CD4-positive, alpha-beta memory T cell (primary cell): ENCODE measurements at regions of chr20 and their contacts with region 1.

Region 1: DNA sequence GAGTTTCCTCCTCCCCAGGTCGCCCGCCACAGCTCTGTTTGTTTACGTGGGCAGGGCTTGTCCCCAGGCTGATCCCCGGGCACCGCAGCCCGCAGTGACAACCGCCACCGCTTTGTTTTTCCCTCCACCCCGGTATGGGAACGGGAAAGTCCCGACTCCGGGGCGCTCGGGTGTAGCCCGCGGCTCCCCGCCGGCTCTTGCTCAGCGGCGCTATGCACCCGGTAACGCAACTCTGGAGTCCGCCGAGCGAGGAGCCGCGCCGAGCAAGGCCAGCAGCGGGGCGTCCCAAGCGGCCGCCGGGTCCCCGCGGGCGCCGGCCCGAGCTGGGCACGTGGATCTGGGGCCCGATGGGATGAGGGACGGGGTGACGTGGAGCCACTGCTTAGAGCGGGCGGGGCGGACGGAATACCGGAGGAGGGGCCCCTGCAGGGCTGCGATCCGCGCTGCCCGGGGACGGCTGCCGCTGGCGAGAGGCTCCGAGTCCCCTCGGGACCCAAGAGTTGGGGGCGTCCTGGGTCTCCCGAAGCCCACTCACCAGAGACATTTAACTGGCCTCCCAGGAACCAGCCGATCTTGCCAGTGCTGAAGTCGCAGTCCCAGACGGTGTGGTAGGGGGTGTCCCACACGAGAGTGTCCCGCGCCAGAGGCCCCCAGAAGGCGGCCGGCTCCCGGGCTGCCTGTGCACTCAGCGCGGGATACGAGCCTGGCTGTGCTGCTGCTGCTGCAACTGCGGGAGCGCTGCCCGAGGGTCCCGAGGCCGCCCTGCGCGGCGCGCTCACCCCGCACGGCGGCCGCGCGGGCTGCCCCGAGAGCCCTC is 497 bp downstream of the ACSS1 start:
- DNase-seq: peak; percentile 84 to 93 (median 87)
- H3K4me3 ChIP-seq: peak overlapping the region; percentile 17 to 84
- H3K4me3 Mint-ChIP-seq: peak overlapping the region; percentile 87 to 93 (median 90)
- H3K27ac ChIP-seq: peak overlapping the region; percentile 82
- H3K27ac Mint-ChIP-seq: peak overlapping the region; percentile 88 to 96 (median 94)
- H3K4me1 ChIP-seq: peaks cover 58% of the 10 kb centered on the region
- H3K4me1 Mint-ChIP-seq: peaks cover 35 to 68% (median 47%) of the 10 kb centered on the region in 4 donors
- H3K27me3 ChIP-seq: no peaks in the 10 kb centered on the region
- H3K27me3 Mint-ChIP-seq: peaks cover 0 to under 1% of the 10 kb centered on the region in 2 donors

Region 2: GRCh38 chr20:24948939-24949679 is 108.3 kb before region 1 on chr20 and contains the start of gene CST7:
- CTCF ChIA-PET with region 1: no interaction called
- POLR2A ChIA-PET with region 1: interaction called, 22 read pairs
- intact Hi-C with region 1: loop called (anchors 2 kb)
- DNase-seq: peak; percentile 85 to 94 (median 87)
- H3K4me3 ChIP-seq: peak within 1 kb of the TSS in 1 of 2 donors; percentile 41
- H3K4me3 Mint-ChIP-seq: peak within 1 kb of the TSS; percentile 65 to 91 (median 84)
- H3K27ac ChIP-seq: peak within 1 kb of the TSS; percentile 65
- H3K27ac Mint-ChIP-seq: peak within 1 kb of the TSS; percentile 81 to 99 (median 96)
- H3K4me1 ChIP-seq: peaks cover 36% of the 10 kb centered on the region
- H3K4me1 Mint-ChIP-seq: peaks cover 32 to 80% (median 57%) of the 10 kb centered on the region in 4 donors
- H3K27me3 ChIP-seq: no peaks in the 10 kb centered on the region
- H3K27me3 Mint-ChIP-seq: no peaks in the 10 kb centered on the region
- total RNA-seq, gene CST7: 23.2 to 23.3 TPM

Region 3: GRCh38 chr20:25006431-25007167 is 50.8 kb before region 1 on chr20:
- CTCF ChIA-PET with region 1: no interaction called
- POLR2A ChIA-PET with region 1: no interaction called
- intact Hi-C with region 1: no loop called
- DNase-seq: no peak
- H3K4me3 ChIP-seq: no peak overlapping the region
- H3K4me3 Mint-ChIP-seq: no peak overlapping the region
- H3K27ac ChIP-seq: no peak overlapping the region
- H3K27ac Mint-ChIP-seq: no peak overlapping the region
- H3K4me1 ChIP-seq: no peaks in the 10 kb centered on the region
- H3K4me1 Mint-ChIP-seq: peaks cover 0 to 3% (median 0%) of the 10 kb centered on the region in 4 donors
- H3K27me3 ChIP-seq: no peaks in the 10 kb centered on the region
- H3K27me3 Mint-ChIP-seq: no peaks in the 10 kb centered on the region

Region 4: DNA sequence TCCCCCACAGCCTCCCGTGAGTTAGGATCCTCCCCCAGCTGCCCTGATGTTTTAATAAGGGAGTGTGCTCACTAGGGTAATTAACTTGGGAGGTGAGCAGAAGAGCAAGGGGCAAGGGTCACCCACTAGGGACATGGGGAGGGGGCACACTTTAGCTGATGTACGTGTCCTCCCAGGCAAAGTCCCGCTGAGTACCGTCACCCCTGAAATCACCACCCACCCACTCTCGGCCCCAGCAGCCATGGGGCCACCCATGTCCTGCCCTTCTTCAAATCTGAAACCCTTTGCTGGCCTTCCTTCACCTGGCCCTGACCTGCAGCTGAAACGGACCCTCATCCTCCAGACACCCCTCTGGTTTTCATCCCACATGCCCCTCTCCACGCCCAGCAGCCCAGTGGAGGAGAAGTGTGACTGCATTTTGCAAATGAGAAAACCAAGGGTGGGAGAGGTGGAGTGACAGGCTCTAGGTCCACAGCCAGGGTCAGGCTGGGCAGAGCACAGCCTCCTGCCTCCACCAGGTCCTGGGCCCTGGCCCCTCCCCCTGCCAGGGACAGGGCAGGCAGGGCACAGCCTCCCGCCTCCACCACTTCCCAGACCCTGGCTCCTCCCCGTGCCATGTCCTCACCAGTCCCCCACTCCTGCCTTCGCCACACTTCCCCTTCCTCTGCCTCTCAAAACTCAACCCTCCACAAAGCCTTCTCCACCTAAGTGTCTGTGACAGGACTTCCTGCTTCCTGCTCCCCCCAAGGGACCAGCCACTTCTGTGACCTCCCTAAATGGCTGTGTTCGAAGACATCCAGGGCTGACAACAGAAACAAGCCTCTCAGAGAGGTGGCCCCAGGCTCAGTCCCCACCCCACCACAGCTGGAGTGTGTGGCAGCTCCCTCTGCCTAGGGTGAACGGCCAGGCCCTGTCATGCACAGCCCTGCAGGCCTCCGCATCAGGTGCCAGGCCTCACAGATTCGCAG is 14.6 kb before region 1 on chr20:
- CTCF ChIA-PET with region 1: interaction called, 4 read pairs
- POLR2A ChIA-PET with region 1: interaction called, 17 read pairs
- intact Hi-C with region 1: loop called (anchors 2 kb)
- DNase-seq: peak; percentile 63 to 71 (median 68)
- H3K4me3 ChIP-seq: no peak overlapping the region
- H3K4me3 Mint-ChIP-seq: peak overlapping the region; percentile 11 to 78 (median 58)
- H3K27ac ChIP-seq: peak overlapping the region; percentile 51
- H3K27ac Mint-ChIP-seq: peak overlapping the region; percentile 87 to 97 (median 95)
- H3K4me1 ChIP-seq: peaks cover 48% of the 10 kb centered on the region
- H3K4me1 Mint-ChIP-seq: peaks cover 14 to 62% (median 42%) of the 10 kb centered on the region in 4 donors
- H3K27me3 ChIP-seq: no peaks in the 10 kb centered on the region
- H3K27me3 Mint-ChIP-seq: no peaks in the 10 kb centered on the region

Region 5: GRCh38 chr20:25178563-25179438 is 121.4 kb after region 1 on chr20:
- CTCF ChIA-PET with region 1: interaction called, 12 read pairs
- POLR2A ChIA-PET with region 1: no interaction called
- intact Hi-C with region 1: no loop called
- DNase-seq: peak; percentile 32 to 47 (median 44)
- H3K4me3 ChIP-seq: no peak overlapping the region
- H3K4me3 Mint-ChIP-seq: no peak overlapping the region
- H3K27ac ChIP-seq: no peak overlapping the region
- H3K27ac Mint-ChIP-seq: peak overlapping the region in 2 of 7 donors; percentile 69 to 78
- H3K4me1 ChIP-seq: no peaks in the 10 kb centered on the region
- H3K4me1 Mint-ChIP-seq: peaks cover 0 to 2% (median under 1%) of the 10 kb centered on the region in 4 donors
- H3K27me3 ChIP-seq: no peaks in the 10 kb centered on the region
- H3K27me3 Mint-ChIP-seq: peaks cover 4 to 6% of the 10 kb centered on the region in 2 donors

Region 6: DNA sequence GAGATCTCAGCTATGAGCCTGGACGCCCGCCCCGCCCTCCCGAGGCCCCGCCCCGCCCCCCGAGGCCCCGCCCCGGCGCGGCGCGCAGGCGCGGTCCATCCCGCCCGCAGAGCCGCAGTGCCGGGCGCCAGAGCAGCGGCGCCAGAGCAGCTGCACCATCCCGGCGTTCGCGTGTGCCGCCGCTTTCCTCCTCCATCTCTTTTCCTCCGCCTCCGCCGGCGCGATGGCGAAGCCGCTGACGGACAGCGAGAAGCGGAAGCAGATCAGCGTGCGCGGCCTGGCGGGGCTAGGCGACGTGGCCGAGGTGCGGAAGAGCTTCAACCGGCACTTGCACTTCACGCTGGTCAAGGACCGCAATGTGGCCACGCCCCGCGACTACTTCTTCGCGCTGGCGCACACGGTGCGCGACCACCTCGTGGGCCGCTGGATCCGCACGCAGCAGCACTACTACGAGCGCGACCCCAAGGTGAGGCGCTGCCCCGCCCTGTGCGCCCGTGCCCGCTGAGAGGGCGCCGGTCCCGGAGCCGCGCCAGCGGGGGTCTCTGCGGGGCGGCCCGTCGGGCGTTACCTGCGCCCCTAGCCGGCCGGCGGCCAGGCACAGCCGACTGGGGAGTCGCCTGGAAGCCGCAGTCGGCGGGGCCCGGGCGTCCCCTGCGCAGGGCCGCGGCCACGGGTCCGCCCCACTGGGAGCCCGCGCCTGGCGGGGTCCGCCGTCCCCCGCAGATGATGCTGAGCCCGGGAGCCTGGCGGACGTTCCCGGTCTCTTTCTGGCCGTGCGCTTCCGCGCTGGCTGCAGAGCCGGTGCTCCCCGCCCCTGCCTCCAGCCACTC is 190.7 kb after region 1 on chr20 and contains the start of gene PYGB:
- CTCF ChIA-PET with region 1: no interaction called
- POLR2A ChIA-PET with region 1: interaction called, 10 read pairs
- intact Hi-C with region 1: loop called (anchors 5 kb)
- DNase-seq: peak; percentile 63 to 80 (median 72)
- H3K4me3 ChIP-seq: peak within 1 kb of the TSS; percentile 65 to 94
- H3K4me3 Mint-ChIP-seq: peak within 1 kb of the TSS; percentile 94 to 97 (median 95)
- H3K27ac ChIP-seq: peak within 1 kb of the TSS; percentile 59
- H3K27ac Mint-ChIP-seq: peak within 1 kb of the TSS; percentile 69 to 94 (median 92)
- H3K4me1 ChIP-seq: peaks cover 30% of the 10 kb centered on the region
- H3K4me1 Mint-ChIP-seq: peaks cover 25 to 55% (median 38%) of the 10 kb centered on the region in 4 donors
- H3K27me3 ChIP-seq: no peaks in the 10 kb centered on the region
- H3K27me3 Mint-ChIP-seq: peaks cover 0 to 2% of the 10 kb centered on the region in 2 donors
- total RNA-seq, gene PYGB: 34.0 to 35.6 TPM